Heart right ventricle (tissue), 16 donors: ENCODE measurements at regions of chr7 and their contacts with region 1.

Region 1: GRCh38 chr7:134113655-134114054 is 13.5 kb upstream of the LRGUK start:
- DNase-seq: no peak
- ATAC-seq: no peak
- H3K4me3 ChIP-seq: no peak overlapping the region
- H3K27ac ChIP-seq: no peak overlapping the region
- H3K4me1 ChIP-seq: no peaks in the 10 kb centered on the region
- H3K27me3 ChIP-seq: no peaks in the 10 kb centered on the region
- CTCF ChIP-seq: no peak

Region 2: GRCh38 chr7:133873631-133874030 is 240.0 kb before region 1 on chr7:
- intact Hi-C with region 1: no loop called
- DNase-seq: no peak
- ATAC-seq: no peak
- H3K4me3 ChIP-seq: no peak overlapping the region
- H3K27ac ChIP-seq: no peak overlapping the region
- H3K4me1 ChIP-seq: no peaks in the 10 kb centered on the region
- H3K27me3 ChIP-seq: no peaks in the 10 kb centered on the region
- CTCF ChIP-seq: no peak

Region 3: GRCh38 chr7:134062460-134062859 is 51.2 kb before region 1 on chr7:
- intact Hi-C with region 1: no loop called
- DNase-seq: peak in 1 of 2 donors; percentile 35
- ATAC-seq: peak; percentile 58 to 98 (median 92)
- H3K4me3 ChIP-seq: no peak overlapping the region
- H3K27ac ChIP-seq: no peak overlapping the region
- H3K4me1 ChIP-seq: peaks cover 0 to 16% (median 3%) of the 10 kb centered on the region in 9 donors
- H3K27me3 ChIP-seq: no peaks in the 10 kb centered on the region
- CTCF ChIP-seq: no peak

Region 4: GRCh38 chr7:134098072-134098471 is 15.6 kb before region 1 on chr7:
- intact Hi-C with region 1: loop called in 1 of 10 experiments (anchors 2 kb)
- DNase-seq: no peak
- ATAC-seq: no peak
- H3K4me3 ChIP-seq: no peak overlapping the region
- H3K27ac ChIP-seq: no peak overlapping the region
- H3K4me1 ChIP-seq: no peaks in the 10 kb centered on the region
- H3K27me3 ChIP-seq: no peaks in the 10 kb centered on the region
- CTCF ChIP-seq: no peak